PC-9 (cell line): ENCODE measurements at regions of chr11 and their contacts with region 1.

Region 1: GRCh38 chr11:60477035-60477445 is 15.5 kb upstream of the MS4A12 start:
- DNase-seq: no peak
- H3K4me3 ChIP-seq: no peak overlapping the region
- H3K27ac ChIP-seq: no peak overlapping the region
- H3K4me1 ChIP-seq: no peaks in the 10 kb centered on the region
- H3K27me3 ChIP-seq: 0 out of 2 replicates have a peak, but pooled peaks cover 3% of the 10 kb centered on the region
- CTCF ChIP-seq: no peak

Region 2: GRCh38 chr11:60357771-60358170 is 119.3 kb before region 1 on chr11:
- CTCF ChIA-PET with region 1: interaction called, 11 read pairs
- POLR2A ChIA-PET with region 1: no interaction called
- intact Hi-C with region 1: loop called (anchors 10 kb)
- DNase-seq: no peak
- H3K4me3 ChIP-seq: no peak overlapping the region
- H3K27ac ChIP-seq: no peak overlapping the region
- H3K4me1 ChIP-seq: no peaks in the 10 kb centered on the region
- H3K27me3 ChIP-seq: no peaks in the 10 kb centered on the region
- CTCF ChIP-seq: no peak